Activated CD4-positive, alpha-beta T cell treated with anti-CD3 and anti-CD28 coated beads, Interleukin-2, amount 10 ng/mL, durations not matched to agents 24 days and 14 days (primary cell): ENCODE measurements at regions of chr2 and their contacts with region 1.

Region 1: DNA sequence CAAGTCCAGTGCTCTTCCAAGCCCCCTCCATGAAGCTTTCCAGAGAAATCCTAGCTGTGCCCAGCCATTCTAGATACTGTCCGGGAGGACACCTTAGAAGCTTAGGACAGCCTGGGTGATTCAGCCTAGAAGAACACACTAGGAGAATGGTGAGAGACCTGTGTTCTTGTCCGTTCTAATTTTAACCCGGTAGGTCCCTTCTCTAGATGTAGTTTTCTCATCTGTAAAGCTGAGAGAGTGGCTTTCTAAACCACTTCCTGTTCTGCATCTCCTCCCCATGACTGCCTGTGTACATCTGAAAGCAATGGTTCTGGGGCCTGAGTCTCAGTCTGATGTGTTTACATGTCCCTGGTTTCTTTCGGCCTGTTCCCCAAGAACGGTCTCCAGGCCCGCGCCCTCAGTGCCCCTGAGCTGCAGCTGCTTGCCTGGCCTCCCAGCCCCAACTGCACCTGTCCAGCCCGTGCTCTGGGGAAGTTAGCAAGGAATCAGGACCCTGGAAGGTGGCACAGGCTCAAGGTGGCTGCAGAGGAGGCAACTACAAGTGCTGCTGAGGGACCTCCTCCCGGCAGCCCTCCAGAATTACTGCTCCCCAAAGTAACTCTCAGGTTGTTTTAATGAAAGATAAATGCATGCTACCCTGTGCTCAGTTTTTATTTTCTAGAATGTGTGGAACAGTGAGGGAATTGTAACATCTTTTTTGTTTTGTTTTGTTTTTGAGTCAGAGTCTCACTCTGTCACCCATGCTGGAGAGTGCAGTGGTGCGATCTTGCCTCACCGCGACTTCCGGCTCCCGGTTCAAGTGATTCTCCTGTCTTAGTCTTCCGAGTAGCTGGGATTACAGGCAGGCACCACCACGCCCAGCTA is 105.9 kb downstream of the LBH start:
- DNase-seq: peak; percentile 89
- H3K4me3 Mint-ChIP-seq: peak overlapping the region; percentile 68
- H3K27ac Mint-ChIP-seq: peak overlapping the region; percentile 94
- H3K4me1 Mint-ChIP-seq: peaks cover 77% of the 10 kb centered on the region
- H3K27me3 Mint-ChIP-seq: no peaks in the 10 kb centered on the region

Region 2: GRCh38 chr2:30115981-30116285 is 221.3 kb before region 1 on chr2:
- intact Hi-C with region 1: no loop called
- DNase-seq: no peak
- H3K4me3 Mint-ChIP-seq: no peak overlapping the region
- H3K27ac Mint-ChIP-seq: no peak overlapping the region
- H3K4me1 Mint-ChIP-seq: peaks cover 4% of the 10 kb centered on the region
- H3K27me3 Mint-ChIP-seq: peaks cover 3% of the 10 kb centered on the region

Region 3: GRCh38 chr2:30146438-30147147 is 190.6 kb before region 1 on chr2 and contains the start of gene YPEL5:
- intact Hi-C with region 1: loop called (anchors 5 kb)
- DNase-seq: peak; percentile 100
- H3K4me3 Mint-ChIP-seq: peak within 1 kb of the TSS; percentile 87
- H3K27ac Mint-ChIP-seq: peak within 1 kb of the TSS; percentile 97
- H3K4me1 Mint-ChIP-seq: peaks cover 32% of the 10 kb centered on the region
- H3K27me3 Mint-ChIP-seq: no peaks in the 10 kb centered on the region
- total RNA-seq, gene YPEL5: 16.8 and 19.6 TPM in 2 replicates

Region 4: DNA sequence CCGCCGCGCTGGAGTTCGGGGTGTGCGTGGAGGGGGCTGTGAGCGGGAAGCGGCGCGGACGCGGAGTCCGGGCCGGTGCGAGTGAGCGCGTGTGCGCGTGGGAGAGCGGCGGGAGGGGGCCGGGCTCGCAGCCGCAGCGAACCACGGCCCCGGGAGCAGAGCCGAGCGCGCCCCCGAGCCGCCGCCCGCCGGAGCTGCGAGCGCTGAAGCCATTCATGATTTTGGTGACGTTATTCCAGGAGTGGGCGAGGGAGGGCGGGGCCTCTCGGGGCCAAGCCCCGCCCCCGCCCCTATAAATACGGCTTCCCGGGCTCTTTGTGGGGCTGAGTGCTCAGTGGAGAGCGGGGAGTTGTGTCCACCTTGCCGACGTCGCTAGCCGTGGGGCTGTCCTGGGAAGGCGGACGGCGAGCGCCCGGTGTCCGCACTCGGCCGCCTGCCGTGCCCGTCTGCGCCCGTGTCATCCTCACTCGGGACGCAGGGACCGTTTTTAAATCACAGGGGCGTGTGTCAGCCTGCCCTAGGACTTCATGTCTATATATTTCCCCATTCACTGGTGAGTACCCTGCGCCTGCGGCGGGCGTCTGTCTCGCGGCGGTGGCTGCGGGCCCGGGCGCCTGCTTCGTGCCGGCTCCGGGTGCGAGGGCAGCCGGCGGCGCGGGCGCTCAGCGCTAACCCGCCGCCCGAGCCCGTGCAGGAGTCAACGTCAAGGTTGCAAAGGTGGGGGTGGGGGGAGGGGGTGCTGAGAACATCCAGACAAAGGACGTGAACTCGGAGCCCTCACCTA is 105.8 kb before region 1 on chr2 and contains the start of gene LBH:
- intact Hi-C with region 1: loop called (anchors 1 kb)
- DNase-seq: peak; percentile 94
- H3K4me3 Mint-ChIP-seq: peak within 1 kb of the TSS; percentile 84
- H3K27ac Mint-ChIP-seq: peak within 1 kb of the TSS; percentile 89
- H3K4me1 Mint-ChIP-seq: peaks cover 58% of the 10 kb centered on the region
- H3K27me3 Mint-ChIP-seq: no peaks in the 10 kb centered on the region
- total RNA-seq, gene LBH: 176 and 184 TPM in 2 replicates

Region 5: DNA sequence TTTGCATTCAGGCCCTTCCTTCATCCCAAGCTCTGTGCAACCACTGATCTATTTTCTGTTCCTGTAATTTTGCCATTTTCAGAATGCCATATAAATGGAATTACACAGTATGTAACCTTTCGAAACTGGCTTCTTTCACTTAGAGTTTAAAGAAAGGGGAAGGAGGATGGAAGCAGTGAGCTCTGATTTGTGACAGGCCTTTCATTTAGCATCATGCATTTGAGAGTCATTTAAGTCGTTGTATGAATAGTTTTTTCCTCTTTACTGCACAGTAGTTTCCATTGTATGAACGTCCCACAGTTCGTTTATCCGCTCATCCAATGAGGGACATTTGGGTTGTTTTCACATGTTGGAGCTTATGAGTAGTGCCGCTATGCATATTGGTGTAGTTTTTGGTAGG is 38.9 kb before region 1 on chr2:
- intact Hi-C with region 1: loop called (anchors 5 kb)
- DNase-seq: no peak
- H3K4me3 Mint-ChIP-seq: no peak overlapping the region
- H3K27ac Mint-ChIP-seq: peak overlapping the region; percentile 79
- H3K4me1 Mint-ChIP-seq: peaks cover 11% of the 10 kb centered on the region
- H3K27me3 Mint-ChIP-seq: no peaks in the 10 kb centered on the region

Region 6: GRCh38 chr2:30366199-30366691 is 29.0 kb after region 1 on chr2:
- intact Hi-C with region 1: loop called (anchors 2 kb)
- DNase-seq: peak; percentile 74
- H3K4me3 Mint-ChIP-seq: peak overlapping the region; percentile 50
- H3K27ac Mint-ChIP-seq: peak overlapping the region; percentile 87
- H3K4me1 Mint-ChIP-seq: peaks cover 48% of the 10 kb centered on the region
- H3K27me3 Mint-ChIP-seq: no peaks in the 10 kb centered on the region

Region 7: DNA sequence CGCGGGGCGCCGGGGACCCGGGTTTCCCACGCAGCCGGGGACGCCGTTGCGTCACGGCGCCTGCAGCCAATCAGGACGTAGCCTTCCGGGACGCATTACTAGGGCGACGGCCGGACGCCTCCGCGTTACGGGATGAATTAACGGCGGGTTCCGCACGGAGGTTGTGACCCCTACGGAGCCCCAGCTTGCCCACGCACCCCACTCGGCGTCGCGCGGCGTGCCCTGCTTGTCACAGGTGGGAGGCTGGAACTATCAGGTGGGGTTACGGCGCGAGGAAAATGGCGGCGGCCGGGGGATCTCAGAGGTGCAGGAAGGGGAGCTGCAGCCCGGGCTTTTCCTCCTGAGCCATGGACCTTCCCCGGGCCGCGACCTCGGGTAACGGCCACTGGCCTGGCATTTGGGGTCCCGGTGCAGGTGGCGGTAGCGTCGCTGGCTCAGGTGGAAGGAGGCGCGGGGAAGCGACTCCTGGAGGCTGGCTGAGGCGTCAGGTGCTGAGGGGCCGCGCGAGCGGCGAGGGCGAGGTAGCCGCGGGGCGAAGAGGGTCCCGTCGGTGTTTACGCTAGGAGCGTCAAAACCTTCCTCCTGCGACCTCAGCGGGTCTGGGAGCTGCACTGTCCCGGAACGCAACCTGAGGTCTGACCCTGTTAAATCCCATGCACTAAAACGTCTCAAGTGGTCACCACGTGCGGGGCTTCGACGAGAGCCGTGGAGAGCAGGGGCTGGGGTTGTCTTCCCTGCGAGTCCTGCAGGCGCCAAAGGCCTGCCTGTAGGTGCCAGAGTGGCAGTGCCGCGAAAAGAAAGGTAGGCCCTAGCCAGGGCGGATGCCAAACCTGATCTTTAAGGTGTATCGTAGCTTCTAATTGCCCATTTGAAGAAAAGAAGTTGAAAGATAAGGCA is 110.2 kb after region 1 on chr2 and contains the start of gene LCLAT1:
- intact Hi-C with region 1: loop called (anchors 1 kb)
- DNase-seq: peak; percentile 97
- H3K4me3 Mint-ChIP-seq: peak within 1 kb of the TSS; percentile 85
- H3K27ac Mint-ChIP-seq: peak within 1 kb of the TSS; percentile 97
- H3K4me1 Mint-ChIP-seq: peaks cover 26% of the 10 kb centered on the region
- H3K27me3 Mint-ChIP-seq: no peaks in the 10 kb centered on the region
- total RNA-seq, gene LCLAT1: 31.4 and 34.7 TPM in 2 replicates

Region 8: GRCh38 chr2:31318361-31319336 is 981.4 kb after region 1 on chr2:
- intact Hi-C with region 1: loop called (anchors 5 kb)
- DNase-seq: peak; percentile 85
- H3K4me3 Mint-ChIP-seq: peak overlapping the region; percentile 64
- H3K27ac Mint-ChIP-seq: peak overlapping the region; percentile 67
- H3K4me1 Mint-ChIP-seq: peaks cover 52% of the 10 kb centered on the region
- H3K27me3 Mint-ChIP-seq: peaks cover 2% of the 10 kb centered on the region